ENCODE measurements at regions of chr2 and their contacts with region 1.

Region 1: DNA sequence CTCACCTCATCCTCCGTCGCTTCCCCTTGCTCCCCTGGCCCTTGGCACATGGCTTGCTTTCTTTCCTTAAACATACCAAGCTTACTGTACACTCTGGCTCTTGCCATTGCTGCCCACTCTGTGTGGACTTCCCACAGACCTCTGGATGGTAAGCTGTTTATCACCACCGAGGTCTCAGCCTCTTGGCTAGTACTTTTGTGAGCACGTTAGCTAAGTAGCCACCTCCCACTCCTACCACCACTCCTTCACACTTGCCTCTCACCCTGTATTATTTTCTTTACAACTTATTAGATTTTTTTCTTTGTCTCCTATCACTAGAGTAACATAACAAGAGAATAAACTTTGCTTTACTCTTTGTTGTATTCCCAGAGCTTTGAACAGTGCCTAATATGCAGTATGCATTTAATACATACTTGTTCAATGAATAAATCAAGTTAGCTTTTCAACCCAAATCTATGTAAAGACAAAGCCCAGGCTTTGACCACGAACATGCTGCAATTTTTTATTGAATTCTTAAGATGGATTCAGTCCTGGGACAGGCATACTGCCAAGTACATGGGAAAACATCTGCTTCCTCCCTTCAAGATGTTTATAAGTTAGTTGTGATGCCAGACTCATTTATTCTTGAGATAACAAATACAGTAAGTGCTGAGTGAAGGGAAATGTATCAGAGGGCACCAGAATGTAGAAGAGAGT is 25.0 kb upstream of the MSGN1 start:
- DNase-seq: no peak
- H3K4me3 Mint-ChIP-seq: no peak overlapping the region
- H3K27ac Mint-ChIP-seq: no peak overlapping the region
- H3K4me1 Mint-ChIP-seq: peaks cover 14% of the 10 kb centered on the region
- H3K27me3 Mint-ChIP-seq: peaks cover 38% of the 10 kb centered on the region

Region 2: GRCh38 chr2:17753803-17754663 is 37.2 kb before region 1 on chr2 and contains the starts of genes GEN1 and SMC6:
- CTCF ChIA-PET with region 1: interaction called, 3 read pairs
- POLR2A ChIA-PET with region 1: interaction called, 14 read pairs
- DNase-seq: peak; percentile 90
- H3K4me3 Mint-ChIP-seq: peak within 1 kb of the TSS; percentile 88
- H3K27ac Mint-ChIP-seq: peak within 1 kb of the TSS; percentile 98
- H3K4me1 Mint-ChIP-seq: peaks cover 53% of the 10 kb centered on the region
- H3K27me3 Mint-ChIP-seq: no peaks in the 10 kb centered on the region
- total RNA-seq, gene GEN1: 41.9 to 43.7 TPM
- total RNA-seq, gene SMC6: 41.3 to 41.9 TPM

Region 3: GRCh38 chr2:17857021-17857420 is 65.8 kb after region 1 on chr2:
- CTCF ChIA-PET with region 1: no interaction called
- POLR2A ChIA-PET with region 1: no interaction called
- DNase-seq: no peak
- H3K4me3 Mint-ChIP-seq: no peak overlapping the region
- H3K27ac Mint-ChIP-seq: no peak overlapping the region
- H3K4me1 Mint-ChIP-seq: no peaks in the 10 kb centered on the region
- H3K27me3 Mint-ChIP-seq: peaks cover 24% of the 10 kb centered on the region